AG04449 (cell line): ENCODE measurements at regions of chrX and their contacts with region 1.

Region 1: GRCh38 chrX:15930585-15930984 is 76.0 kb upstream of the AP1S2 start:
- DNase-seq: no peak
- H3K4me3 ChIP-seq: no peak overlapping the region
- CTCF ChIP-seq: peak; percentile 17

Region 2: DNA sequence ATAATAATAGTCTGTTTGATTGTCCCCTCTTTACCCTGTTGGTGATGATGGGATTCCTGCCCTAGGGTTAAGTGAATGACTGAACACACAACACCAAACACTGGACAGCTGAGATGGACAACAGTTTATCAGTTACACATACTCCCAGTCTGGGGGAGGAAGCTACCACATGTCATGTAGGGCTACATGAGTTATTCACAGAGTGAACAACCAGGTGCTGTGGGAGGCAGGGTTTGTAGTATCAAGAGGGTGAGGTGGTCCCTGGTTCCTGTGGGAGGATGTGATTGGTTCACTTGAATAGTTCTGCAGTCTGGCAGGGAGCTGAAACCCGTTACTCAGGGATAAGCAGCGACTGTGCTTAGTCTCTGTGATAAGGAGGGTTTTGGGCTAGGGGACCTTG is 12.8 kb after region 1 on chrX:
- CTCF ChIA-PET with region 1: interaction called, 13 read pairs
- POLR2A ChIA-PET with region 1: no interaction called
- DNase-seq: no peak
- H3K4me3 ChIP-seq: no peak overlapping the region
- CTCF ChIP-seq: no peak

Region 3: DNA sequence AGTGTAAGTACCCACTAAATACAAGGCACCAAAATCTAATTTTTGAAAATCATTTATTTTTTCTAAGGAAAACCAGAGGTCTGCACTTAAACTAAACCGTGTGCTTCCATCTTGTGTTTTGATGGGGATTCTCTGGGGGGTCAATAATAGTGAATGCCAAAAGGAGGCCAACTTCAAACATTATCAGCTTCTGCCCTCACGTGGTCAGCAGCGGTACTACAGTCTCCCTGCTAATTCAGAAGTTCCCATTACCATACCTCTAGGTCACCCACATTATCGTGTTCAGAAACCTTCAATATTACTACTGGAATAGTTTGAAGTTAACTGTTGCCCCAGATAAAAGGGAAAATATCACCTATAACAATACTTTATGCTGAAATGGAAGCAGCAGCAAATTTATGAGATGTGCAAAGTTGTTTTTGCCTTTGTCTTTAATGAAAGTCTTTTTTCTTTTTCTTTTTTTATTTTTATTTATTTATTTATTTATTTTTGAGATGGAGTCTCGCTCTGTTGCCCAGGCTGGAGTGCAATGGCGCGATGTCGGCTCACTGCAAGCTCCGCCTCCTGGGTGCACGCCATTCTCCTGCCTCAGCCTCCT is 764.6 kb after region 1 on chrX:
- CTCF ChIA-PET with region 1: interaction called, 14 read pairs
- POLR2A ChIA-PET with region 1: no interaction called
- DNase-seq: no peak
- H3K4me3 ChIP-seq: no peak overlapping the region
- CTCF ChIP-seq: peak; percentile 71